Activated CD4-positive, alpha-beta T cell treated with anti-CD3 and anti-CD28 coated beads for 36 hours (primary cell): ENCODE measurements at regions of chr16 and their contacts with region 1.

Region 1: DNA sequence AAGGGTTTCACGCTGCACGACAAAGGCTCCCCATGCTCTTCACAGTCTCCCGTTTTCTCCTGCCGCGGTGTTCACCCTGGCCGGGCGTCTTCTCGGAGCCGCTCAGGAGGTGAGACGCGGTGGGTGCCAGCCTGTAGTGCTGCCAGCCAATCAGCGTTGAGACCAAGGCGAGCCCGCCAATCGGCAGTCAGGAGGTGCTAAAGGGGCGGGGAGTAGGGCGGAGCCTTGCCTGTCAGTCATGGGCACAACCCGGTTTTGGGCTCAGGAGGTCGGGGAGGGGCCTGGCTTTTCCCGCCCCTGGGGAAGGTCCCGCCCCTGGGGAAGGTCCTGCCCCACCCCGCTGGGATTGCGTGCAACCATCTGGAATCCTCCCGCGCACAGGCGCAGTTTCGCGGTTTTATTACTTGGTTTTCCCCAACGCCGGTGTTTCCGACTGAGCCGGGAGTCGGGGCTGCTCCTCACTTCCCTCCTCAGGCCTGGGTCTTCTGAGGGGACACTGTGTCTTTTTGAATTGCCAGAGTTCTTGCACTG is at the start of gene PRDM7:
- DNase-seq: peak; percentile 99
- ATAC-seq: peak; percentile 97
- H3K4me3 Mint-ChIP-seq: peak within 1 kb of the TSS; percentile 78
- H3K27ac Mint-ChIP-seq: peak within 1 kb of the TSS; percentile 82
- H3K4me1 Mint-ChIP-seq: peaks cover 28% of the 10 kb centered on the region
- H3K27me3 Mint-ChIP-seq: peaks cover 11% of the 10 kb centered on the region
- total RNA-seq, gene PRDM7: not detected

Region 2: GRCh38 chr16:89686520-89687091 is 390.7 kb before region 1 on chr16 and contains the start of gene CDK10:
- CTCF ChIA-PET with region 1: no interaction called
- POLR2A ChIA-PET with region 1: no interaction called
- intact Hi-C with region 1: loop called in 1 of 2 experiments (anchors 1 kb)
- DNase-seq: peak; percentile 92
- ATAC-seq: peak; percentile 90
- H3K4me3 Mint-ChIP-seq: peak within 1 kb of the TSS; percentile 86
- H3K27ac Mint-ChIP-seq: peak within 1 kb of the TSS; percentile 88
- H3K4me1 Mint-ChIP-seq: peaks cover 14% of the 10 kb centered on the region
- H3K27me3 Mint-ChIP-seq: no peaks in the 10 kb centered on the region
- total RNA-seq, gene CDK10: 78.1 to 89.8 TPM

Region 3: DNA sequence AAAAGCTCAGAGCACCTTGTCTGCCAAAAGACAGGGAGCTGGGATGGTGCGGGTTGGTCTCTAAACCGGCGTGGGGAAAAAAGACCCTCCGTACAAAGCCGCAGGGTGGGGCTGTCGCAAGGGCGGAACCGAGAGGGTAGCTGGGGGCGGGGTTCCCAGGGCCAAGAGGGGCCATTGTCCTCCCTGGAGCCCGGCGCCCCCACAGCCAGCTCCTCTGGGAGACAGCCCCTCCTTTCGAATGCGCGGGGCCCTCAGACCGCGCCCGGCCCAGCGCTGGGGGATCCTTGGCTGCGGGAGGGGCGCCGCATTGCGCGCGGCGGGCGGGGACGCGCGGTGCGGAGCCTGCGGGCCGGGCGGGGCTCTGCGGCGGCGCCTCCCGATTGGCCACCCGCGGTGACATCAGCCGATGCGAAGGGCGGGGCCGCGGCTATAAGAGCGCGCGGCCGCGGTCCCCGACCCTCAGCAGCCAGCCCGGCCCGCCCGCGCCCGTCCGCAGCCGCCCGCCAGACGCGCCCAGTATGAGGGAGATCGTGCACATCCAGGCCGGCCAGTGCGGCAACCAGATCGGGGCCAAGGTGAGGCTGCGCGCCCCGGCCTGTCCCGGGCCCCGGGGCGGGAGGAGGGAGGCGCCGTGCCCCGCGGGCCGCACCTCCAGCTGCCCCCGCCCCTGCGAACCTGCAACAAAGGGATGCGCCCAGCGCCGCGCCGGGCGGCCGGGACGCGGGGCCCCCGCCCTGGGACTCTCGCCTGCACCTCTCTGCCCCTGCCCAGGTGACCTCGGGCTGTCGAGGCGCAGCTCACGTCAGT is 154.2 kb before region 1 on chr16 and contains the start of gene TUBB3:
- CTCF ChIA-PET with region 1: no interaction called
- POLR2A ChIA-PET with region 1: no interaction called
- intact Hi-C with region 1: loop called in 1 of 2 experiments (anchors 2 kb)
- DNase-seq: peak; percentile 72
- ATAC-seq: peak; percentile 34
- H3K4me3 Mint-ChIP-seq: peak within 1 kb of the TSS; percentile 55
- H3K27ac Mint-ChIP-seq: no peak within 1 kb of the TSS
- H3K4me1 Mint-ChIP-seq: peaks cover 43% of the 10 kb centered on the region
- H3K27me3 Mint-ChIP-seq: peaks cover 38% of the 10 kb centered on the region
- total RNA-seq, gene TUBB3: 0.40 to 0.43 TPM

Region 4: DNA sequence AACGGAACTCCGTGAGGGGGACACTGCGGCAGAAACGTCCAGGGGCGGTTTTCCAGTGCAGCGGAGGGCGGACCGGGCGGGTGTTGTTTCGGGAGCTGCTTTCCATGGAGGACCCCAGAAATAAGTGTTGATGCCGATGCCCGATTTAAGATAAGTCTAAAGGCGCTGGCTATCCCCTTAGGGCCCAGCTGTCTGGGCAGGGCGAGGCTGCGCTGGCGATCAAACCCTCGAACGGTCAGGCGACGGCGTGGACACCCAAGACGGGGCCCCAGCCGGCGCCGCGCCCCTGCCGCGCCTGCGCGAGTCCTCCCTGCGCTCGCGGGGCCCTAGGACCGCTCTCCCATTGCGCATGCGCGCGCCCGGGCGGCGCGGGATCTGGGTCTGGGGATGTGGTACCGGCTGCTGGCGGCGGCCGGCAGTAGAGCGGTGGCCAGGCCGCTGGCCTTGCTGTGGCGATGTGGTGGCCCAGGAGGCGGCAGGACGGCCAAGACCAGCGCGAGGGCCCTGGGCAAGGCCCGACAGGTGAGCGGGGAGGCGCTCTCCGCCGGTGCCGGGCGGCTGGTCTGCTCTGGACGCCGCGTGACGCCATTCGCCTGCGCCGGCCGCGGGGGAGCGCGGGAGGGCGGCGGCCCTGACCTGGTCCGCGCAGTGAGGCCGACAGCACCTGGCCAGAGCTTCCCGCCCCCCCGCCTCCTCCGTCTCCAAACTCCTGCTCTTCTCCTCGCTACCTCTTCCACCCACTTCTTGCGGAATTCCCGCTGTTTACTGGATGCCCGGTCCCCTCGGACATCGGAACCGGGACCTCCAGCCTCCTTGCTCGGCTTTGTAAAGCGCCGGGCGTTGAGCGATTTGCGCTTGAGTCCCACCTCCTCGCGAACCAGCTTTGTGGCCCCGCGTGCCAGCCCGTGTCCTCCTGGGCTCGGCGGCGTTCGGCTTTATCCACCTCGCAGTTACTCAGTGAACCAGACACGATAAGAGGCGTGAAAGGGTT is 104.8 kb before region 1 on chr16:
- CTCF ChIA-PET with region 1: interaction called, 3 read pairs
- POLR2A ChIA-PET with region 1: no interaction called
- intact Hi-C with region 1: loop called in 1 of 2 experiments (anchors 1 kb)
- DNase-seq: peak; percentile 94
- ATAC-seq: peak; percentile 94
- H3K4me3 Mint-ChIP-seq: peak overlapping the region; percentile 99
- H3K27ac Mint-ChIP-seq: peak overlapping the region; percentile 95
- H3K4me1 Mint-ChIP-seq: peaks cover 32% of the 10 kb centered on the region
- H3K27me3 Mint-ChIP-seq: no peaks in the 10 kb centered on the region

Region 5: DNA sequence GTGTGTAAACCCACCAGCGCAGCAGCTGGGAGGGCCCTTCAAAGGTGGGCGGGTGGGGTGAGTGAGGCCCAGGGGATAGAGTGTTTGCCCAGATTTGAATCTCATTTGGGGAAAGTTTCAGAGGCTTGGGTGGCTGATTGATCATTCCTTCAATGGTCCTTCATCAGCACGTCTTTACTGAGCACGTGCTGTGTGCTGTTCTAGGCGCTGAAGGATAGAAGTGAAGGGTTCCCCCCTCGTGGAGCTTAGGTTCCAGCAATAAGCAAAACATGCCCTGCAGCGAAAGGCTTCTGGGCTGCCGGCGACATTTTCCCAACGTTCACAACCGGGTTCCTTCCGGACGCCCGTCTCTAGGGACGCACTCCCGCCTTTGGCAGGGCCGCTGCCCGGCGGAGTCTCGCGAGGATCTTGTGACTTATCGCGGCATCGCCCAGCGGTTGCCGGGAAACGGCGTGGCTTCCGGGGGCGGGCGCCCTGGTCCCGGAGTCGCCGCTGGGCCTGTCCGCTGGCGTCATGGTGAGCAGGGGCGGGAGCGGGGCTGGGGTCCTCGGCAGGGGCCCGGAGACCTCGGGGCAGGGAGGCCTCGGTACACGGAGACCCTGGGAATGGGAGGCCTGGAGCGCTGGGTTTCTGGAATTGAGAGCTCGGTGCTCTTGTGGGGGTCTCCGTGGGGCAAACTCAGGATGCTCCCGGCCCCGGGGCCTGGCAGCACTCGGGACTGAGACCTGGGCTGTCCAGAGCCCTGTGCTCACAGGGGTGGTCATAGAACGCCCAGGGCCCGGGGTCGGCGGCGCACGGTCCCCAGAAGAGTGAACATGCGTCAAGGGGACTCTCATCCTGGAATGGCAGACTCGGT is 54.9 kb before region 1 on chr16:
- CTCF ChIA-PET with region 1: interaction called, 3 read pairs
- POLR2A ChIA-PET with region 1: no interaction called
- intact Hi-C with region 1: loop called (anchors 1 to 2 kb)
- DNase-seq: peak; percentile 92
- ATAC-seq: peak; percentile 86
- H3K4me3 Mint-ChIP-seq: peak overlapping the region; percentile 66
- H3K27ac Mint-ChIP-seq: peak overlapping the region; percentile 77
- H3K4me1 Mint-ChIP-seq: peaks cover 21% of the 10 kb centered on the region
- H3K27me3 Mint-ChIP-seq: peaks cover 5% of the 10 kb centered on the region

Region 6: DNA sequence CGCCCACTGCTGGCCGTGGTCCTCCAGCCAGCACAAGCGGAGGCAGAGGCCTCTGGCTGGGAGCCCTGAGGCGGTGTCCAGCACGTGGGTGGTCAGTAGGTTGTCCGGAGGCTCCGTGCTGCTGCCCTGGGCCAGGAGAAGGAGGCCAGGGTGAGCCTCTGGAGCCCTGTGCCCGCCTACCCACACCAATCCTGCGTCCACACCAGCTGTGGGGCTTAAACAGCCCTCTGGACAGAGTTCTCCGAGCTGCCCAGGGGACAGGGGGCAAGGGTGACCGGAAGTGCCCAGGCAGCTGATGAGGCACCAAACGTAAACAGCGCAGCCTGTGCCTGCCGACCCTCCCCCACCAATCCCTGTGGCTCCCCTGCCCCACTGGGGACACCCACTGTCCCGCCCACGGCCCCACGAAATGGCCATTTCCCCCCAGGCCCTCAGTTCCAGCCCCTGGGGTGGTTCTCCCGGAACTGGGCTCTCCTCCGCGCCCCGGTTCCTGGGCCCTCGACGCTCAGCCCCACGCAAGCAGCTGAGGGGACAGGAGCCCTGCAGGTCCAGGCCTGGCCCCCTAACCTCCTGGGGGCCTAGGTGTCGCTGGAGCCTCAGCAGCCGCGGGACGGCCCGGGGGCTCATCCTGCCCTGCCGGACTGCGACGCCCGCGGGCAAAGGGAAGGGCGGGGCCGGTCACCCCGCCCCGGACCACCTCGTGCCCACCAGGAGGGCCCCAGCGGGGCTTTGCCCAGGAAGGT is 30.1 kb before region 1 on chr16:
- CTCF ChIA-PET with region 1: no interaction called
- POLR2A ChIA-PET with region 1: no interaction called
- intact Hi-C with region 1: loop called in 1 of 2 experiments (anchors 1 kb)
- DNase-seq: peak; percentile 10
- ATAC-seq: peak; percentile 37
- H3K4me3 Mint-ChIP-seq: no peak overlapping the region
- H3K27ac Mint-ChIP-seq: no peak overlapping the region
- H3K4me1 Mint-ChIP-seq: peaks cover 4% of the 10 kb centered on the region
- H3K27me3 Mint-ChIP-seq: peaks cover 8% of the 10 kb centered on the region